ENCODE measurements at regions of chr1 and their contacts with region 1.

Region 1: GRCh38 chr1:214328770-214329469 is 48.0 kb downstream of the SMYD2 start:
- DNase-seq: peak; percentile 68 to 78
- H3K4me3 ChIP-seq: no peak overlapping the region
- H3K27ac ChIP-seq: no peak overlapping the region
- H3K4me1 ChIP-seq: peaks cover 15% of the 10 kb centered on the region; the same call in 1 of the 2 replicates
- H3K27me3 ChIP-seq: no peaks in the 10 kb centered on the region
- CTCF ChIP-seq: peak; percentile 89

Region 2: GRCh38 chr1:213244664-213245091 is 1084.2 kb before region 1 on chr1:
- CTCF ChIA-PET with region 1: interaction called, 3 read pairs
- POLR2A ChIA-PET with region 1: no interaction called
- intact Hi-C with region 1: loop called (anchors 10 kb)
- DNase-seq: peak in 1 of 2 experiments; percentile 11
- H3K4me3 ChIP-seq: no peak overlapping the region
- H3K27ac ChIP-seq: no peak overlapping the region
- H3K4me1 ChIP-seq: no peaks in the 10 kb centered on the region
- H3K27me3 ChIP-seq: no peaks in the 10 kb centered on the region
- CTCF ChIP-seq: peak; percentile 93

Region 3: GRCh38 chr1:213564215-213564659 is 764.7 kb before region 1 on chr1:
- CTCF ChIA-PET with region 1: no interaction called
- POLR2A ChIA-PET with region 1: no interaction called
- intact Hi-C with region 1: loop called (anchors 5 kb)
- DNase-seq: no peak
- H3K4me3 ChIP-seq: no peak overlapping the region
- H3K27ac ChIP-seq: no peak overlapping the region
- H3K4me1 ChIP-seq: peaks cover 17% of the 10 kb centered on the region
- H3K27me3 ChIP-seq: no peaks in the 10 kb centered on the region
- CTCF ChIP-seq: peak; percentile 60

Region 4: DNA sequence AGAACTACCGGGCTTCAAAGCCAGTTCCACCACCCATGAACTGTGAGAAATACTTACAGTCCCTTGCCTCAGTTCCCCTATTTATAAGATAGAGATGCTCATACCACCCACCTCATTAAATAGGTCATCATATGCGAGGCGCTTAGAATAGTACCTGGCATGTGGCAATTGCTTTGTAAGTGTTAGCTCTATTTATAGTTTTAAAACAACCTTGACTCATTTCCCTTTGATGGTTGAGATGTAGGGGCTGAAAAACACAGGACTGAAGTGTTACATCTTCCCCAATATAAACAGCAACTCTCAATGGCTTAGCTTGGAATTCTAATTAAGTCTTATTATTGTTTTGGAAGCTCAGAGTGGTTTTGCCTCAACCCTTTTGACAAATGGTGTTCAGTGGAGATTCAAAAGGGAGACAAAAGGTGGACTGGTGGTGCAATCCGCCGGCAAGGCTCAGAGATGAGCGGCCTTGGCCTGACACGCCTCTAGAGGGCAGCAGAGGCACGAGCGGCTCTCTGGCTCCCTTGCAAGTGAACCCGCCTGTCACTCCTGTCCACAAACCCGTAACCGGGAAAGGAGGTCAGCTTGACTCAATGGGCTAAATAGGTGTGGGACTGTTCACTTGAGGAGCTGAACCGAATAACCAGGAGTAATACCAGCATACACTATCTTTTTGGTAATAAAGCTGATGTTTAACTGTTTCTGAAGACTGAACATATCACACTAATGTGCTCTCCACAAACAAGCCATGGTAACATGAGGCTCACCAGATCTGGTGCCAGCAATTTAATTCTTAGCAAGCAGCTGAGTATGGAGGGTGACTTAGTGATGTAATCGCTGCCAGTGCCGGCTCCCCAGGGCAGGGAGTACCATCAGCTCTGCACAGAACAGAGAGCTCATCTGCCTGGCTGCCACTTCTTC is 67.5 kb before region 1 on chr1:
- CTCF ChIA-PET with region 1: interaction called, 23 read pairs
- POLR2A ChIA-PET with region 1: no interaction called
- intact Hi-C with region 1: loop called (anchors 1 kb)
- DNase-seq: peak; percentile 51 to 80
- H3K4me3 ChIP-seq: no peak overlapping the region; the same call in 1 of the 2 replicates
- H3K27ac ChIP-seq: no peak overlapping the region
- H3K4me1 ChIP-seq: peaks cover 30% of the 10 kb centered on the region
- H3K27me3 ChIP-seq: no peaks in the 10 kb centered on the region
- CTCF ChIP-seq: peak; percentile 87

Region 5: DNA sequence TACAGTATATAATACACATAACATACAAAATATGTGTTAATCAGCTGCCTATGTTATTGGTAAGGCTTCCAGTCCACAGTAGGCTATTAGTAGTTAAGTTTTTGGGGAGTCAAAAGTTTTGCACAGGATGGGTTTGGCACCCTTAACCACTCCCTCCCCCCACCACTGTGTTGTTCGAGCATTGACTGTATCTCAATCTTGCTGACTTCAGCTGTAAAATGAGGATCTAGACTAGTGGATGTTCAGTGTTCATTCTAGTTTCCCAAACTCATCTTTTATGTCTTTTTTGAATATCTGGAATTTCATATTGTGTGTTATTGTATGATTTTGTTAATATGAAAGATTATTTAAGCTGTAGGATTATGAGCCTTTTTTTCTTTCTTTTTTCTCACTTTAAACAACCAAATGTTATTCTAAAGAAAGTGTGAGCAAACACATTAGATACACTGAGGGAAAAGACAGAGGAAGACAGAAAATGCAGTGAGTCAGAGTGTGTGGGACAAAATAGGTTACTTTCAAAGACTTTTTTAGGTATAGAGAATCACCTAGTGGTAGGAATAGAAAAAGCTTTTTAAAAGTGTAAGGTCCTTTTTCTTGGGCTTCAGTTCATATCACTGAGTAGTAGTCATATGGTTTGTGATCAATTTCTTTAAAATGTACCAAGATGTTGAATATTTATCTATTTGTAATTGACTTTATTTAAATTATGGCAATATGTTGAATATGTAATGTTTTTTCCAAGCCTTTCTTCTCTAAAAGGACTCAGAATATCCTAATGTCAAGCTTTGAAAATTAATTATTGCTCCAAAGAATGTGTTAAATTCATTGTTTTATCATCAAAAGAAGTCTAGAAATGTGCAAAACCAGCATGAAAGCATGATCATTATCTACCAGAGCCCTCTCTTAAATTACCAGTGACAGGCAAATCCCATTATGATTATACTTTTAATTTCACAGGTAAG is 256.2 kb after region 1 on chr1:
- CTCF ChIA-PET with region 1: interaction called, 18 read pairs
- POLR2A ChIA-PET with region 1: no interaction called
- intact Hi-C with region 1: loop called (anchors 1 kb)
- DNase-seq: peak in 1 of 2 experiments; percentile 73
- H3K4me3 ChIP-seq: no peak overlapping the region
- H3K27ac ChIP-seq: no peak overlapping the region
- H3K4me1 ChIP-seq: peaks cover 30% of the 10 kb centered on the region
- H3K27me3 ChIP-seq: no peaks in the 10 kb centered on the region
- CTCF ChIP-seq: peak; percentile 86

Region 6: GRCh38 chr1:214637722-214638458 is 309.0 kb after region 1 on chr1:
- CTCF ChIA-PET with region 1: no interaction called
- POLR2A ChIA-PET with region 1: no interaction called
- intact Hi-C with region 1: loop called (anchors 1 kb)
- DNase-seq: peak in 1 of 2 experiments; percentile 9
- H3K4me3 ChIP-seq: no peak overlapping the region
- H3K27ac ChIP-seq: no peak overlapping the region
- H3K4me1 ChIP-seq: no peaks in the 10 kb centered on the region; the same call in 1 of the 2 replicates
- H3K27me3 ChIP-seq: no peaks in the 10 kb centered on the region
- CTCF ChIP-seq: peak; percentile 78